ENCODE measurements at regions of chr6 and their contacts with region 1.

Region 1: DNA sequence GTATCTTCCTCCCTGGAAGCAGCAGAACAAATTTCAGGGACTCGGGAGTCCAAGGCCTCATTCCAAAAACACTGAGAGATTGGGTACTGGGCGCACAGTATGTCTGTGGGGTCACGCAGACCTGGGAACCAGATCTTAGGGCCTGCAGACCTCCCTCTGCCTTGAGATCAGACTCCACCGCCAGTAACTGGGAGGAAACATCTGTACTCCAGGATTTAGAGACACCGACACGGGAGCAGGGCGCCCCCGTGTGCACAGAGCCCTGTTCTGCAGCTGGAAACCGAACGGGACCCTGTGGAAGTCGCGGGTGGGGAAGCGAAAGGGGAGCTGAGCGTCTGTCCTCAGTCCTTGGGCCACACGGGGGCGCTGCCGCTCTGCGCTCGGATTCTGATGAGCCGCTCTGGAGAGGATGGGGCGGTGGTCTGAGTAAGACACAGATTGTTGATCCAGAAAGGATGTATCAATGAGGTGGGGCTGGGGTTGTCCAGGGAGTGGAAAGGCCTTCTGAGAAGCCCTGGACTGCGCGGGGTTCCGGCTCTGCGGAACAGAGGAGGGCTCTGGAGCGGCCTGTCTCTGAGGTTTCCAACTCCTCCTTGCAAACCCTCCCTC is 35.7 kb upstream of the HLA-E start:
- DNase-seq: peak; percentile 88
- ATAC-seq: peak; percentile 83
- H3K4me3 Mint-ChIP-seq: no peak overlapping the region
- H3K27ac Mint-ChIP-seq: no peak overlapping the region
- H3K4me1 Mint-ChIP-seq: peaks cover 30% of the 10 kb centered on the region
- H3K27me3 Mint-ChIP-seq: peaks cover 92% of the 10 kb centered on the region

Region 2: DNA sequence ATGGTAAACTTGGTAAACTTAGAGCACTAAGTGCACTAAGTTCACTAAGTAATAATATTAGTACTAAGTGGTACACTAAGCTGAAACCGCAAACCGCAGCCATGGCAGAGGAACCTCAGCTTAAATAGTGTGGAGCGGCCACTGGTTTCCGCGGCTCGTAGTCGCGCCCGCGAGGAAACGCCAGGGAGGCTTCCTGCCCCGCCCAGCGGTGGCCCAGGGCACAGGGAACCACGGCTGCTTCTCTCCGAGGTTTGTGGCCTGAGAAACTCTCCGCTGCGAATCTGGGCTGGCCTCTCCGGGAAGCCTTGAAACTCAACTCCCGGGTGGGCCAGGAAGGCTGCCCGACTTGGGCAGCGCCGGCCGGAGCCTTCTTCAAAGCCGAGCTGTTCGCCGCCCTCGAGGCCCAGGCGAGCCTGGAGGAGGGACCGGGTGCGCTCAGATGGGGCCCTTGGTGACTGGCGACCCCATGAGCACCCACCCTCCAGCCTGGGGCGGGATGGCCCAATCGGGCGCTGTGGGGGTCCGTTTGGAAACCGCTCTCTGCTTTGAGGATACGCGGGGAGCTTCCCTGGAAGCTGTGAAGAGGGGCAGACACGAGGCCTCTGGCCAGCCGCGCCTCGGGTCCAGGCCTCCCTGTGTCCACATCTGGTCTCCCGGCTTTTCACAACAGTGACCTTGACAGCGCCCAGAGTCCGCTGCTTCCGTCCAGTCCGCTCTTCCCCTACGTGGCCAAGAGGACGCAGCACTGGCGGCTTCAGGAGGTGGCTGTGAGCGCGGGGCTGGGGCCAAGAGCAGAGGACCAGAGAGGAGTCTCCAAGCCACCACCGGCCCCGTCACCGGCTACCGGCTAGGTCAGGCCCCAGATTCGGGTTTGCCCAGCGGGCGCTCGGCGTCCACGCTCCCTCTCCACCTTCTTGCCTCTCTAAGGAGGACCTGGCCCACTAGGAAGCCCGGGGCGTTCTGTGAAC is 10.3 kb after region 1 on chr6:
- CTCF ChIA-PET with region 1: interaction called, 45 read pairs
- DNase-seq: peak; percentile 87
- ATAC-seq: peak; percentile 72
- H3K4me3 Mint-ChIP-seq: no peak overlapping the region
- H3K27ac Mint-ChIP-seq: no peak overlapping the region
- H3K4me1 Mint-ChIP-seq: peaks cover 35% of the 10 kb centered on the region
- H3K27me3 Mint-ChIP-seq: peaks cover 90% of the 10 kb centered on the region

Region 3: DNA sequence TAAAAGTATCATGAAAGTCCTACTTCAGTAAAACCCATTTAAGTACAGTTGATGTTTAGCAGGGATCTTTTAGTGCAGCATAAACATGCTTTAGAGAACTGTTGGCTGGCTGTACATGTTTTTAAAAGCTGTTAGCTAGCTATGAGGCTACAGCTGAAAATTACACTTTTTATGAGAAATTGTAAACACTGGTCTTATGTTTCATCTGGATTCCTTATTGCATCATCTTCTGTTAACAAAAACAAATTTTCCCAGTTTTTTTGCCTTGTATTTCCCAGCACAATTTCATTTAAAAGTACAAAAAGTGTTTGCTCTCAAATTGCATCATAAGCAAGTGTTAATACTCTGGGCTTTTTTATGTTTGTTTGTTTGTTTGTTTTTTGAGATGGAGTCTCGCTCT is 17.4 kb after region 1 on chr6:
- CTCF ChIA-PET with region 1: interaction called, 45 read pairs
- DNase-seq: no peak
- ATAC-seq: no peak
- H3K4me3 Mint-ChIP-seq: no peak overlapping the region
- H3K27ac Mint-ChIP-seq: no peak overlapping the region
- H3K4me1 Mint-ChIP-seq: peaks cover 9% of the 10 kb centered on the region
- H3K27me3 Mint-ChIP-seq: peaks cover 79% of the 10 kb centered on the region

Region 4: DNA sequence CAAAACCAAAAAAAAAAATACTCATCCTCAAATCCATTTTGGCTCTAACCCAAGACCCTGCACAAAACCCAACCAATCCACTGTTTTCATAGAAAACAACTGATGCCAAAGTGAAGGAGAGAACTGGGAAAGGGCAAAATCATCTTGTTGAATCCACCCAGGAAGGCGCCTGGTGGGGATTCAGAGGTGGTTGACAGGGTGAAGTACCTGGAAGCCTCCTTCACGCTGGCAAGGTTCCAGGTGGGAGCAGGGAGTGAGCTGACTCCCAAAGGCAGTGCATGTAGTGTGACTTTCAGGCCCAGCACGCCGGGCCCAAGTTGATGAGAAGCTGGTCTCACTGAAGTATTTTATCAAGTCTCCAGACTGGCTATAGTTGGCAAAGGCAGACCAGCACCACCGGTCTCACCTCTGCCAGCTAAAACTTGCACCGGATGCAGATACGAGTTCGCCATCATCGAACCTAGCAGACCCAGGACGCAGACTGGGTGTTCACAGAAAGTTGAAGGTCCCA is 146.9 kb after region 1 on chr6:
- CTCF ChIA-PET with region 1: interaction called, 11 read pairs
- DNase-seq: no peak
- ATAC-seq: no peak
- H3K4me3 Mint-ChIP-seq: no peak overlapping the region
- H3K27ac Mint-ChIP-seq: no peak overlapping the region
- H3K4me1 Mint-ChIP-seq: peaks cover 12% of the 10 kb centered on the region
- H3K27me3 Mint-ChIP-seq: no peaks in the 10 kb centered on the region

Measured in activated CD8-positive, alpha-beta memory T cell treated with anti-CD3 and anti-CD28 coated beads, Interleukin-2, amount 10 ng/mL, durations not matched to agents 7 days and 5 days (primary cell).